Tibial artery (tissue), 4 donors: ENCODE measurements at regions of chr1 and their contacts with region 1.

Region 1: GRCh38 chr1:164625001-164625617 is 66.1 kb downstream of the PBX1 start:
- DNase-seq: no peak
- H3K4me3 ChIP-seq: no peak overlapping the region
- H3K27ac ChIP-seq: no peak overlapping the region
- H3K4me1 ChIP-seq: peaks cover 0 to 29% (median 13%) of the 10 kb centered on the region in 4 donors
- H3K27me3 ChIP-seq: no peaks in the 10 kb centered on the region
- CTCF ChIP-seq: peak in 1 of 2 experiments; percentile 19

Region 2: GRCh38 chr1:163410073-163410999 is 1214.8 kb before region 1 on chr1:
- intact Hi-C with region 1: loop called (anchors 10 kb)
- DNase-seq: peak in 1 of 2 donors; percentile 25
- H3K4me3 ChIP-seq: no peak overlapping the region
- H3K27ac ChIP-seq: no peak overlapping the region
- H3K4me1 ChIP-seq: peaks cover 0 to 3% (median 0%) of the 10 kb centered on the region in 4 donors
- H3K27me3 ChIP-seq: peaks cover 0 to 11% of the 10 kb centered on the region in 2 donors
- CTCF ChIP-seq: peak; percentile 54 to 61

Region 3: GRCh38 chr1:164456272-164456671 is 168.8 kb before region 1 on chr1:
- intact Hi-C with region 1: no loop called
- DNase-seq: no peak
- H3K4me3 ChIP-seq: no peak overlapping the region
- H3K27ac ChIP-seq: no peak overlapping the region
- H3K4me1 ChIP-seq: no peaks in the 10 kb centered on the region
- H3K27me3 ChIP-seq: no peaks in the 10 kb centered on the region
- CTCF ChIP-seq: no peak